ENCODE measurements at regions of chr5 and their contacts with region 1.

Region 1: GRCh38 chr5:85865296-85865695 is 752.4 kb upstream of the COX7C start:
- DNase-seq: no peak
- ATAC-seq: no peak
- H3K4me3 Mint-ChIP-seq: no peak overlapping the region
- H3K27ac Mint-ChIP-seq: no peak overlapping the region
- H3K4me1 Mint-ChIP-seq: no peaks in the 10 kb centered on the region
- H3K27me3 Mint-ChIP-seq: no peaks in the 10 kb centered on the region

Region 2: DNA sequence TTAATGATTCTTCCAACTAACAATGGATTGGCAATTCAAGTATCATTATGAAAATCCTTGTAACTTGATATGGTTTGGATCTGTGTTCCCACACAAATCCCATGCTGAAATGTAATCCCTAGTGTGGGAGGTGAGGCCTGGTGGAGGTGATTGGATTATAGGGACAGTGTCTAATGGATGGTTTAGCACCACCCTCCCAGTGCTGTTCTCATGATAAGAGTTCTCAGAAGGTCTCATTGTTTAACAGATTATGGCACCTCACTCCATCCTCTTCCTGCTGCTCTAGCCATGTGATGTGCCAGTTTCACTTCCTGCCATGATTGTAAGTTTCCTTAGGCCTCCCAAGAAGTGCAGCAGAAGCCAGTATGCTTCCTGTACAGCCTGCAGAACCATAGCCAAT is 364.4 kb before region 1 on chr5:
- CTCF ChIA-PET with region 1: no interaction called
- POLR2A ChIA-PET with region 1: no interaction called
- intact Hi-C with region 1: no loop called
- DNase-seq: no peak
- ATAC-seq: no peak
- H3K4me3 Mint-ChIP-seq: no peak overlapping the region
- H3K27ac Mint-ChIP-seq: no peak overlapping the region
- H3K4me1 Mint-ChIP-seq: no peaks in the 10 kb centered on the region
- H3K27me3 Mint-ChIP-seq: no peaks in the 10 kb centered on the region

Region 3: DNA sequence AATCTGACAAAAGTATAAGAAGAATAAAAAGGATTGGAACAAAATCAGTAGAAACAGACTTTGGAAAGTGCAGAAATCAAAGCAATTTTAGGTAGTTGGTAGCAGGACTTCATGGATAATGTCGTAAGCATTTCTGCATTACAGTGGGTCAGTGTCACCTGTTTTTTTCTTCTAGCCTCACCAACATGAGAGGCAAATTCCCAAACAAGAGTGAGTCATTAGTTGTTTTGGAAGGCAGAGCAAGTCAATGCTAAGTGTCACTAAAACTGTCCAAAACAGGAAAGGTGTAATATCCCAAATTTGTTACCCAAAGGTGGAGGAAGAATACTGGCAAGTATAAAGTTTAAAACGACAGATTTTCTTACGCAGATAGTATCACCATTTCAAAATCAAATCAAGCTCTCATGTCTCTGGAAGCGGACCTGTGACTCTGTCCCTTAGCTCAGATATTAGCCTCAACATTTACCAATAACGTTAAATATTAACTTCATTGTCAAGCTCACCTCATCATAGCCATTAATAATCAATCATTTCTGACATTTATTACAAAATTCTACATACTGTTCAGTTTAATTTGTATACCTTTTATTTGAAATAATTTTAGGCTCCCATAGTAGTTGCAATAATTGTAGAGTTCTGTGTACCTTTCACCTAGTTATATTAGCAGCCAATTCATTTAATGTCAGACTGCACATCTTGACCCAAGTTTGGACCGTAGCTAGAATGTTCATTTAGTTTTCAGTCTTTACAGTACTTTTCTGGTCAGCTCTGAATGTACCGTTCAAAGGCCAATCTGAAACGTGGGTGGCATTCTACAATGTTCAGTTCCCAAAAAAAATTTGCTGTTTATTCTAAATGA is 148.7 kb before region 1 on chr5:
- CTCF ChIA-PET with region 1: no interaction called
- POLR2A ChIA-PET with region 1: no interaction called
- intact Hi-C with region 1: no loop called
- DNase-seq: no peak
- ATAC-seq: no peak
- H3K4me3 Mint-ChIP-seq: no peak overlapping the region
- H3K27ac Mint-ChIP-seq: no peak overlapping the region
- H3K4me1 Mint-ChIP-seq: no peaks in the 10 kb centered on the region
- H3K27me3 Mint-ChIP-seq: no peaks in the 10 kb centered on the region

Region 4: GRCh38 chr5:85843535-85843934 is 21.8 kb before region 1 on chr5:
- CTCF ChIA-PET with region 1: no interaction called
- POLR2A ChIA-PET with region 1: no interaction called
- intact Hi-C with region 1: loop called in 1 of 2 experiments (anchors 1 kb)
- DNase-seq: no peak
- ATAC-seq: no peak
- H3K4me3 Mint-ChIP-seq: no peak overlapping the region
- H3K27ac Mint-ChIP-seq: no peak overlapping the region
- H3K4me1 Mint-ChIP-seq: no peaks in the 10 kb centered on the region
- H3K27me3 Mint-ChIP-seq: no peaks in the 10 kb centered on the region

Measured in activated CD4-positive, alpha-beta T cell treated with anti-CD3 and anti-CD28 coated beads for 36 hours (primary cell).